ENCODE measurements at regions of chr19 and their contacts with region 1.

Region 1: GRCh38 chr19:38929929-38930775 is at the start of gene SARS2:
- DNase-seq: peak in 32 of 35 experiments; percentile 84 to 98 (median 90)
- ATAC-seq: peak; percentile 63 to 77 (median 70)
- H3K4me3 ChIP-seq: peak within 1 kb of the TSS; percentile 86 to 89
- H3K4me3 Mint-ChIP-seq: peak within 1 kb of the TSS; percentile 97 to 99 (median 97)
- H3K27ac ChIP-seq: peak within 1 kb of the TSS; percentile 86
- H3K27ac Mint-ChIP-seq: peak within 1 kb of the TSS; percentile 96 to 99
- H3K4me1 ChIP-seq: peaks cover 10 to 74% of the 10 kb centered on the region in 2 experiments
- H3K4me1 Mint-ChIP-seq: peaks cover 34 to 53% (median 39%) of the 10 kb centered on the region in 3 donors
- H3K27me3 ChIP-seq: no peaks in the 10 kb centered on the region
- H3K27me3 Mint-ChIP-seq: no peaks in the 10 kb centered on the region
- total RNA-seq, gene SARS2: 22.0 to 33.5 (median 26.0) TPM

Region 2: GRCh38 chr19:38022791-38023670 is 907.1 kb before region 1 on chr19:
- CTCF ChIA-PET with region 1: no interaction called
- POLR2A ChIA-PET with region 1: no interaction called
- DNase-seq: no peak
- ATAC-seq: no peak
- H3K4me3 ChIP-seq: no peak overlapping the region
- H3K4me3 Mint-ChIP-seq: no peak overlapping the region
- H3K27ac ChIP-seq: no peak overlapping the region
- H3K27ac Mint-ChIP-seq: no peak overlapping the region
- H3K4me1 ChIP-seq: no peaks in the 10 kb centered on the region
- H3K4me1 Mint-ChIP-seq: peaks cover 2 to 9% (median 9%) of the 10 kb centered on the region in 3 donors
- H3K27me3 ChIP-seq: no peaks in the 10 kb centered on the region
- H3K27me3 Mint-ChIP-seq: no peaks in the 10 kb centered on the region

Region 3: GRCh38 chr19:38374429-38375176 is 555.5 kb before region 1 on chr19 and contains the start of gene PSMD8:
- CTCF ChIA-PET with region 1: interaction called in 1 of 2 experiments, 12 read pairs
- POLR2A ChIA-PET with region 1: no interaction called
- DNase-seq: peak; percentile 94 to 100 (median 99)
- ATAC-seq: peak; percentile 95 to 97 (median 97)
- H3K4me3 ChIP-seq: peak within 1 kb of the TSS; percentile 74 to 92
- H3K4me3 Mint-ChIP-seq: peak within 1 kb of the TSS; percentile 98 to 100 (median 99)
- H3K27ac ChIP-seq: peak within 1 kb of the TSS; percentile 79
- H3K27ac Mint-ChIP-seq: peak within 1 kb of the TSS; percentile 97 to 98
- H3K4me1 ChIP-seq: peaks cover 15 to 37% of the 10 kb centered on the region in 2 experiments
- H3K4me1 Mint-ChIP-seq: peaks cover 30 to 35% (median 31%) of the 10 kb centered on the region in 3 donors
- H3K27me3 ChIP-seq: peaks cover 0 to 13% of the 10 kb centered on the region in 2 experiments
- H3K27me3 Mint-ChIP-seq: peaks cover 0 to 11% of the 10 kb centered on the region in 2 donors
- total RNA-seq, gene PSMD8: 76.4 to 95.2 (median 85.8) TPM

Region 4: GRCh38 chr19:38618590-38619360 is 311.4 kb before region 1 on chr19 and contains the start of gene EIF3K:
- CTCF ChIA-PET with region 1: interaction called in 1 of 2 experiments, 11 read pairs
- POLR2A ChIA-PET with region 1: no interaction called
- DNase-seq: peak; percentile 92 to 99 (median 95)
- ATAC-seq: peak; percentile 68 to 82 (median 74)
- H3K4me3 ChIP-seq: peak within 1 kb of the TSS; percentile 95 to 96
- H3K4me3 Mint-ChIP-seq: peak within 1 kb of the TSS; percentile 96 to 98 (median 98)
- H3K27ac ChIP-seq: peak within 1 kb of the TSS; percentile 83
- H3K27ac Mint-ChIP-seq: peak within 1 kb of the TSS; percentile 98
- H3K4me1 ChIP-seq: peaks cover 11 to 62% of the 10 kb centered on the region in 2 experiments
- H3K4me1 Mint-ChIP-seq: peaks cover 50 to 56% (median 52%) of the 10 kb centered on the region in 3 donors
- H3K27me3 ChIP-seq: no peaks in the 10 kb centered on the region
- H3K27me3 Mint-ChIP-seq: no peaks in the 10 kb centered on the region
- total RNA-seq, gene EIF3K: 317 to 352 (median 319) TPM

Region 5: GRCh38 chr19:38862321-38863059 is 67.7 kb before region 1 on chr19:
- CTCF ChIA-PET with region 1: no interaction called
- POLR2A ChIA-PET with region 1: interaction called in 1 of 2 experiments, 23 read pairs
- DNase-seq: no peak
- ATAC-seq: no peak
- H3K4me3 ChIP-seq: no peak overlapping the region
- H3K4me3 Mint-ChIP-seq: no peak overlapping the region
- H3K27ac ChIP-seq: no peak overlapping the region
- H3K27ac Mint-ChIP-seq: no peak overlapping the region
- H3K4me1 ChIP-seq: peaks cover 19 to 48% of the 10 kb centered on the region in 2 experiments
- H3K4me1 Mint-ChIP-seq: peaks cover 29 to 48% (median 38%) of the 10 kb centered on the region in 3 donors
- H3K27me3 ChIP-seq: no peaks in the 10 kb centered on the region
- H3K27me3 Mint-ChIP-seq: no peaks in the 10 kb centered on the region

Region 6: DNA sequence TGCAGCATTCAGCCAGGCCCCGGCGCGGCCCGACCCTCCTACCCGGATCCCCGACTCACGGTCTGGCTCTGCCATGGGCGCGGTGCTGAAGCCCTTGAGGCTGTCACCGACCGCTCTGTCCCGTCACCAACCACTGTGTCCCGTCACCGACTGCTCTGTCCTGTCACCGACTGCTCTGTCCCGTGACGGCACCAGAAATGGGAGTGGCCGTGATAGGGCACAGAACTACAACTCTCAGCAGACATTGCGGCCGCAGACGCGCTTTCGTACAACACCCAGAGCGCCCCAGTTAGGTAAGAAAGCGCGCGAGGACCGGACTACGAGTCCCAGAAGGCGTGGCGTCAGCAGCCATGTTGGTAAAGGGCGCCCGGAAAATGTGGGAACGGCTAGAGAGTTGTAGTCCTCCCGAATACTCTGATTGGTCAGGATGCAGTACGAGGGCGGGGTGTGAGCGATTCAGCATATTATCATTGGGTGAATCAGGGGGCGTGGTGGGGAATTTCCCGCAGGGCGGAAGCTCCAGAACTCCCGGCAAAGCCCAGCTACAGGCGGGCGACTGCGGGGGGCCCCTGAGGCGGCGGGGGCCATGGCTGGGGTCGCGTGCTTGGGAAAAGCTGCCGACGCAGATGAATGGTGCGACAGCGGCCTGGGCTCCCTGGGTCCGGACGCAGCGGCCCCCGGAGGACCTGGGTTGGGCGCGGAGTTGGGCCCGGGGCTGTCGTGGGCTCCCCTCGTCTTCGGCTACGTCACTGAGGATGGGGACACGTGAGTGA is 30.5 kb before region 1 on chr19 and contains the starts of genes NFKBIB and SIRT2:
- CTCF ChIA-PET with region 1: interaction called, 3 to 23 read pairs
- POLR2A ChIA-PET with region 1: interaction called in 1 of 2 experiments, 11 read pairs
- DNase-seq: peak; percentile 95 to 100 (median 99)
- ATAC-seq: peak; percentile 89 to 94 (median 93)
- H3K4me3 ChIP-seq: peak within 1 kb of the TSS; percentile 80 to 83
- H3K4me3 Mint-ChIP-seq: peak within 1 kb of the TSS; percentile 86 to 100 (median 93)
- H3K27ac ChIP-seq: peak within 1 kb of the TSS; percentile 92
- H3K27ac Mint-ChIP-seq: peak within 1 kb of the TSS; percentile 94
- H3K4me1 ChIP-seq: peaks cover 9 to 28% of the 10 kb centered on the region in 2 experiments
- H3K4me1 Mint-ChIP-seq: peaks cover 50 to 52% (median 51%) of the 10 kb centered on the region in 3 donors
- H3K27me3 ChIP-seq: no peaks in the 10 kb centered on the region
- H3K27me3 Mint-ChIP-seq: no peaks in the 10 kb centered on the region
- total RNA-seq, gene NFKBIB: 31.9 to 36.8 (median 33.9) TPM
- total RNA-seq, gene SIRT2: 50.7 to 67.6 (median 55.6) TPM

Region 7: DNA sequence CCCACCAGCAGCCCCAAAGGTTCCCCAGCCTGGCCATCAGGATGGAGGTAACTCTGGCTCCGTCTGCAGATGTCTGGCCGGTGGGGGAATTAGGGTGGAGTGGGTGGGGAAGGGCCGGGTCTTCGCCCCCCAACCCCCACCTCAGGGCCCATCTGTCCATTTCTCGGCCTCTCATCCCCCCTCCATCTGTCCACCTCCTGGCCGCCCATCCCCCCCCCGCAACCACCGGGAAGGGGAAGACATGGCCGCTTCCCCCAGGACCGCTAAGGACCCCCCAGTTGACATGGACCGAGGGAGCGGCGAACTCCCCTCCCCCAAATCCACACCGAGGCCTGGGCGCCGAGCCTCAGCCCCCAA is 389.7 kb after region 1 on chr19:
- CTCF ChIA-PET with region 1: no interaction called
- POLR2A ChIA-PET with region 1: no interaction called
- DNase-seq: no peak
- ATAC-seq: no peak
- H3K4me3 ChIP-seq: peak overlapping the region in 1 of 2 donors; percentile 64
- H3K4me3 Mint-ChIP-seq: peak overlapping the region; percentile 59 to 78 (median 67)
- H3K27ac ChIP-seq: no peak overlapping the region
- H3K27ac Mint-ChIP-seq: peak overlapping the region in 1 of 2 donors; percentile 72
- H3K4me1 ChIP-seq: peaks cover 2 to 19% of the 10 kb centered on the region in 2 experiments
- H3K4me1 Mint-ChIP-seq: peaks cover 25 to 44% (median 29%) of the 10 kb centered on the region in 3 donors
- H3K27me3 ChIP-seq: peaks cover 0 to 2% of the 10 kb centered on the region in 2 experiments
- H3K27me3 Mint-ChIP-seq: no peaks in the 10 kb centered on the region

Measured in T-cell (primary cell).